Psoas muscle (tissue), 8 donors: ENCODE measurements at regions of chr1 and their contacts with region 1.

Region 1: GRCh38 chr1:98268316-98268715 is 347.5 kb upstream of the DPYD start:
- DNase-seq: no peak
- ATAC-seq: no peak
- H3K4me3 ChIP-seq: no peak overlapping the region
- H3K27ac ChIP-seq: no peak overlapping the region
- H3K4me1 ChIP-seq: no peaks in the 10 kb centered on the region
- H3K27me3 ChIP-seq: no peaks in the 10 kb centered on the region
- CTCF ChIP-seq: no peak

Region 2: GRCh38 chr1:98172578-98172977 is 95.7 kb before region 1 on chr1:
- intact Hi-C with region 1: no loop called
- DNase-seq: no peak
- ATAC-seq: no peak
- H3K4me3 ChIP-seq: no peak overlapping the region
- H3K27ac ChIP-seq: no peak overlapping the region
- H3K4me1 ChIP-seq: no peaks in the 10 kb centered on the region
- H3K27me3 ChIP-seq: no peaks in the 10 kb centered on the region
- CTCF ChIP-seq: no peak

Region 3: GRCh38 chr1:98232678-98233077 is 35.6 kb before region 1 on chr1:
- intact Hi-C with region 1: loop called in 1 of 2 experiments (anchors 2 kb)
- DNase-seq: no peak
- ATAC-seq: no peak
- H3K4me3 ChIP-seq: no peak overlapping the region
- H3K27ac ChIP-seq: no peak overlapping the region
- H3K4me1 ChIP-seq: no peaks in the 10 kb centered on the region
- H3K27me3 ChIP-seq: no peaks in the 10 kb centered on the region
- CTCF ChIP-seq: no peak

Region 4: GRCh38 chr1:99133756-99134500 is 865.6 kb after region 1 on chr1:
- intact Hi-C with region 1: no loop called
- DNase-seq: no peak
- ATAC-seq: no peak
- H3K4me3 ChIP-seq: no peak overlapping the region
- H3K27ac ChIP-seq: no peak overlapping the region
- H3K4me1 ChIP-seq: no peaks in the 10 kb centered on the region
- H3K27me3 ChIP-seq: no peaks in the 10 kb centered on the region
- CTCF ChIP-seq: no peak